Esophagus squamous epithelium (tissue), 5 donors: ENCODE measurements at regions of chr1 and their contacts with region 1.

Region 1: GRCh38 chr1:203273206-203273868 is 32.0 kb upstream of the BTG2 start:
- DNase-seq: peak; percentile 51
- H3K4me3 ChIP-seq: peak overlapping the region; percentile 4 to 54 (median 25)
- H3K27ac ChIP-seq: peak overlapping the region; percentile 83 to 95 (median 92)
- H3K4me1 ChIP-seq: peaks cover 30 to 85% (median 61%) of the 10 kb centered on the region in 3 donors
- H3K27me3 ChIP-seq: no peaks in the 10 kb centered on the region
- CTCF ChIP-seq: peak; percentile 98 to 100 (median 99)
- POLR2A ChIP-seq: peak in 2 of 4 donors; percentile 44 to 61

Region 2: GRCh38 chr1:203304919-203305808 is 31.8 kb after region 1 on chr1 and contains the start of gene BTG2:
- intact Hi-C with region 1: loop called (anchors 5 kb)
- DNase-seq: peak; percentile 62
- H3K4me3 ChIP-seq: peak within 1 kb of the TSS; percentile 88 to 96 (median 93)
- H3K27ac ChIP-seq: peak within 1 kb of the TSS; percentile 97 to 99 (median 99)
- H3K4me1 ChIP-seq: peaks cover 31 to 76% (median 40%) of the 10 kb centered on the region in 3 donors
- H3K27me3 ChIP-seq: no peaks in the 10 kb centered on the region
- CTCF ChIP-seq: no peak
- POLR2A ChIP-seq: peak; percentile 23 to 100 (median 98)
- total RNA-seq, gene BTG2: 29.7 to 46.2 (median 41.3) TPM